ENCODE measurements at regions of chr3 and their contacts with region 1.

Region 1: GRCh38 chr3:49539659-49540560 is 14.4 kb upstream of the BSN start:
- DNase-seq: peak; percentile 97
- ATAC-seq: peak; percentile 97

Region 2: GRCh38 chr3:49428697-49429100 is 111.2 kb before region 1 on chr3:
- intact Hi-C with region 1: no loop called
- DNase-seq: no peak
- ATAC-seq: peak; percentile 1

Region 3: GRCh38 chr3:49673715-49674496 is 134.0 kb after region 1 on chr3 and contains the start of gene APEH:
- intact Hi-C with region 1: loop called (anchors 5 kb)
- DNase-seq: peak; percentile 98
- ATAC-seq: peak; percentile 94
- total RNA-seq, gene APEH: 113 TPM